Left ventricle myocardium superior (tissue), 1 donor: ENCODE measurements at regions of chr4 and their contacts with region 1.

Region 1: DNA sequence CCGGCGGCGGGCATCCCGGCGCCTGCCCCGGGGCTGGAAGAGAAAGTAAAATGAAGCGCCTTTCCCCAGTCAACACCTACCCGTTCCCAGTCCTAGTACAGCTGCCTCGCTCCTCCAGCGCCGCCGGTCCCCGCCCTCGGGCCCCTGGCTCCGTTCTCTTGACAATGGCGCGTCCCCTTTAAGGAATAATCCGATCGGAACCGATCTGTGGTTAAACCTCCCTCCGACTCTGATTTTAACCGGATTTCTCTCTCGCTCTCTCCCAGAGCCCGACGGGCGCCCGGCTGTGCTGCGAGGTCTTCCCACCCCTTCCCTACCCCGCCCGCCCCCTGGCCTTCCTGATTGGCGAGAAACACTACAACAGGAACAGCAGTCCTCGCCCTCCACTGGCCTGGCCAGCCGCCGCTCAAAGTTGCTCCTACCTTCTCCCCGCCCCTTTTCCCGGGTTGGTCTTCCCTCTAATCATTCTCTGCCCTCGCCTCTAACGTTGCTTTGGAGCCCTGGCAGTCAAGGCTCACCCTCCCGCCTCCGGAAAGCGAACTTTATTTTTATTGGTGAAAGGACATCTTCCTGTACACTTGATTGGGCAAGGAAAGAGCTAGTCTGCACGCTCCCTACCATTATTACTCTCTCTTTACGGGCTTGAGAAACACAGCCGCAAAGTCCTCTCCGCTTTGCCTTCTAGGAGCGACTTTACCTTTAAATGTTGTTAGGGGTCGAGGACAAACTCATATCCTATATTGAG is at the start of gene FRYL:
- DNase-seq: peak; percentile 99
- ATAC-seq: peak; percentile 94
- total RNA-seq, gene FRYL: 40.2 TPM

Region 2: GRCh38 chr4:48047421-48047844 is 732.7 kb before region 1 on chr4:
- intact Hi-C with region 1: no loop called
- DNase-seq: no peak
- ATAC-seq: peak; percentile 45

Region 3: GRCh38 chr4:48653217-48654014 is 126.8 kb before region 1 on chr4:
- intact Hi-C with region 1: loop called (anchors 5 kb)
- DNase-seq: peak; percentile 66
- ATAC-seq: peak; percentile 95